Pancreas (tissue), 10 donors: ENCODE measurements at regions of chr17 and their contacts with region 1.

Region 1: DNA sequence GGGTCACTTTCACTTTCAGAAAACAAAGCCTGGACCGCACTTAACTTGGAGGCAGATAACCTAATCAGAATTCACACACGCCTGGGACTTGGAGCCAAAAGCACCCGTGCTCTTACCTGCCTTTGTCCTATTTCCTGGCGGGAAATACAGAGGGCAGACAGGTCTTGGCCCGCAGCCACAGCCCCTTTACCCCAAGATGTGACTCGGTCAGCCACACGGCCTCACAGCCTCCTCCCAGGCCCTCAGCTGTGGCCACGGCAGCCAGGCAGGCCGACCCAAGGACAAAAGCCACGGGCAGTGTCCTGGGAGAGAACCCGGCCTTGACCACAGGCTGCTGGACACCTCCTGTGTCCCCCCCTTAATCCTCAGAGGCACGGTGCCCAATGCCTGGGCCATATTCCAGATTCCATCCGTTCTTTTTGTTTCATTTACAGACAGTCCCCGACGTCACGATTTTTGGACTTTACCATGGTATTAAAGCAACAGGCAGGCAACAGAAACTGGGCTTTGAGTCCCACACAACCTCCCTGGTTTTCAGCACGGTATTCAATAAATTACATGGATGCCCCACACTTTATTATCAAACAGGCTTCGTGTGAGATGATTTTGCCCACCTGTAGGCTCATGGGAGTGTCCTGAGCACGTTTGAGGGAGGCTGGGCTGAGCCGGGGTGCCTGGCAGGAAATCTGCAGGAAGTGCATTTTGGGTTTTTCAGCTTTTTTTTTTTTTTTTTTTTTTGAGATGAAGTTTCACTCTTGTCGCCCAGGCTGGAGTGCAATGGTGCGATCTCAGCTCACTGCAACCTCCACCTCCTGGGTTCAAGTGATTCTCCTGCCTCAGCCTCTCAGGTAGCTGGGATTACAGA is 30.0 kb upstream of the GAA start:
- DNase-seq: peak; percentile 64 to 91 (median 76)
- ATAC-seq: peak; percentile 72 to 84 (median 74)
- H3K4me3 ChIP-seq: peak overlapping the region in 3 of 4 donors; percentile 4 to 34 (median 33)
- H3K27ac ChIP-seq: peak overlapping the region; percentile 72 to 89 (median 86)
- H3K4me1 ChIP-seq: peaks cover 7 to 32% (median 9%) of the 10 kb centered on the region in 3 donors
- H3K27me3 ChIP-seq: no peaks in the 10 kb centered on the region
- CTCF ChIP-seq: no peak

Region 2: DNA sequence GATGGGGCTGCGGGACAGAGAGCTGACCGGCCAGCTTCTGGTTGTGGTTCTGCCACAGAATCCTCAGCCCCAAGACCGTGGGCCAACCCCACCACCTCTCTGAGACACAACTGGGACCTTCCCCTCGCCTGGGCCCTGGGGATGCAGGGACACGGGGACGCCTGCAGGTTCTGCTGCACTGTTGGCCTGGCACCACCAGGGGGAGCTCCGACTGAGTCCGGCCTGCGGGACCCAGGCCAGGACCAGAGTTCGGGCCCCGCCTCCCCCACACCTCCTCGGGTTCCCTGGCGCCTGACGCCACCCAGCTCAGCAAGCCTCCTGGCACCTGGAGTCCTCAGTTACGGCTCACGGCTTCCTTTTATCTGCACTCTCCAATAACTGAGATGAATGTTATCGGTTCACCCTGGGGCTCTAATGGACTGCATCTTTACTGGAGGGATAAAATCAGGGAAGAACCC is 62.9 kb before region 1 on chr17:
- intact Hi-C with region 1: loop called in 1 of 3 experiments (anchors 10 kb)
- DNase-seq: peak; percentile 85 to 97 (median 92)
- ATAC-seq: peak; percentile 84 to 94 (median 92)
- H3K4me3 ChIP-seq: no peak overlapping the region
- H3K27ac ChIP-seq: no peak overlapping the region
- H3K4me1 ChIP-seq: peaks cover 0 to 5% (median 5%) of the 10 kb centered on the region in 3 donors
- H3K27me3 ChIP-seq: no peaks in the 10 kb centered on the region
- CTCF ChIP-seq: peak; percentile 93 to 97 (median 95)

Region 3: GRCh38 chr17:80035943-80036714 is 35.2 kb before region 1 on chr17 and contains the start of gene CCDC40:
- intact Hi-C with region 1: no loop called
- DNase-seq: peak; percentile 84 to 96 (median 90)
- ATAC-seq: peak; percentile 92 to 96 (median 93)
- H3K4me3 ChIP-seq: peak within 1 kb of the TSS; percentile 67 to 89 (median 79)
- H3K27ac ChIP-seq: peak within 1 kb of the TSS; percentile 84 to 90 (median 86)
- H3K4me1 ChIP-seq: peaks cover 0 to 6% (median 4%) of the 10 kb centered on the region in 3 donors
- H3K27me3 ChIP-seq: no peaks in the 10 kb centered on the region
- CTCF ChIP-seq: no peak
- total RNA-seq, gene CCDC40: 1.9 to 6.2 (median 3.1) TPM

Region 4: DNA sequence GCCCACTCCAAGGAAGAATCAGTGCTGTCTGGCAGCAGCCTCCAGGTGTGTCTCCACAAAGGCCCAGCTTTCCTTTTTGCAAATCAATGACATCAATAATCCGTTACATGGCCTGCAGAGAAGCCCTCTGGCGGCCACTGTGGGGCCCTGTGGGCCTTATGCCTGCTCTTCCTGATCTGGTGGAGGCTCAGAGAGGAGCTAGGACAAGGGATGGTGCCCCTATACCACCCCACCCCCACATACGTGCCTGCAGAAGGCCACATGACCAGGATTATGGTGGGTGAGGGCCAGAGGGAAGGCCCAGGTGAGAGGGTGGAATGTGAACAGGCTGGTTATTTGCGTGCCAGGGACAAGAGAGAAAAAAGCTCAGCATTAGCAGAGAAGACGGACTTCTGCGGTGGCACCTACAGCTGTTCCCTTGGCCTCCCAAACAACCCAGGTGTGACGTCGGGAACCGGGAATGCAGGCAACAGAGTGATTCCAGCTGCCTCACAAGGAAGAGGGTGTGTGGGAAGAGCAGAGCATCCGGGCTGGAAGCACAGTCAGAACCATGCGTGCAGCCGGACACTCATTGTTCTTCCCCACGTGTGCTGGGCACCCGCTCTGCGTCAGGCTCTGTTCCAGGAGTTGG is 53.1 kb after region 1 on chr17:
- intact Hi-C with region 1: no loop called
- DNase-seq: peak in 3 of 6 donors; percentile 29 to 52 (median 34)
- ATAC-seq: peak; percentile 47 to 84 (median 76)
- H3K4me3 ChIP-seq: no peak overlapping the region
- H3K27ac ChIP-seq: peak overlapping the region in 3 of 4 donors; percentile 0 to 52 (median 36)
- H3K4me1 ChIP-seq: peaks cover 0 to 6% (median 0%) of the 10 kb centered on the region in 3 donors
- H3K27me3 ChIP-seq: no peaks in the 10 kb centered on the region
- CTCF ChIP-seq: peak in 3 of 4 donors; percentile 9 to 34 (median 22)